Breast epithelium (tissue), 4 donors: ENCODE measurements at regions of chr9 and their contacts with region 1.

Region 1: GRCh38 chr9:108600896-108601295 is 254.9 kb downstream of the ACTL7B start:
- DNase-seq: no peak
- H3K4me3 ChIP-seq: no peak overlapping the region
- H3K27ac ChIP-seq: no peak overlapping the region
- H3K4me1 ChIP-seq: peaks cover 0 to 3% of the 10 kb centered on the region in 2 donors
- H3K27me3 ChIP-seq: no peaks in the 10 kb centered on the region
- CTCF ChIP-seq: no peak
- POLR2A ChIP-seq: no peak

Region 2: GRCh38 chr9:107410388-107410785 is 1190.5 kb before region 1 on chr9:
- intact Hi-C with region 1: no loop called
- DNase-seq: no peak
- H3K4me3 ChIP-seq: no peak overlapping the region
- H3K27ac ChIP-seq: no peak overlapping the region
- H3K4me1 ChIP-seq: no peaks in the 10 kb centered on the region
- H3K27me3 ChIP-seq: no peaks in the 10 kb centered on the region
- CTCF ChIP-seq: no peak
- POLR2A ChIP-seq: no peak

Region 3: GRCh38 chr9:108535526-108535925 is 65.4 kb before region 1 on chr9:
- intact Hi-C with region 1: loop called (anchors 2 kb)
- DNase-seq: no peak
- H3K4me3 ChIP-seq: no peak overlapping the region
- H3K27ac ChIP-seq: no peak overlapping the region
- H3K4me1 ChIP-seq: no peaks in the 10 kb centered on the region
- H3K27me3 ChIP-seq: no peaks in the 10 kb centered on the region
- CTCF ChIP-seq: peak in 2 of 3 donors; percentile 15 to 39
- POLR2A ChIP-seq: no peak

Region 4: DNA sequence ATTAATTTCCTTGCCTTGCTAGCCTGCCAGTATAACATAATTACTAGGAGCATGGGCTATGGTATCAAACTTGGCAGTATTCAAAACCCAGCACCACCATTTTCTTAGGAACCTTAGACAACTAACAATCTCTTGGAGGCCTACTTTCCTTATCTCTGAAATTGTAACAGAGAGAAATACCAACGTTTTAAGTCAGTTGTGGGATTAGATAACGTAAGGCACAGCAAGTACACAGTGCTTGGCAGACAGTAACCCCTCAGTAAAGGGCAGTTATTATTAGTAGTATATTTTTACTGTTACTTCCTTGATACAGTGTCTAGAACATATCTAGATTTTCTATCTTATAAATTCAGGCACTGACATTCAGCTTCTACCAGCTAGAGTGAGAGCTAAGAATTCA is 54.7 kb before region 1 on chr9:
- intact Hi-C with region 1: no loop called
- DNase-seq: no peak
- H3K4me3 ChIP-seq: no peak overlapping the region
- H3K27ac ChIP-seq: no peak overlapping the region
- H3K4me1 ChIP-seq: no peaks in the 10 kb centered on the region
- H3K27me3 ChIP-seq: no peaks in the 10 kb centered on the region
- CTCF ChIP-seq: no peak
- POLR2A ChIP-seq: no peak

Region 5: DNA sequence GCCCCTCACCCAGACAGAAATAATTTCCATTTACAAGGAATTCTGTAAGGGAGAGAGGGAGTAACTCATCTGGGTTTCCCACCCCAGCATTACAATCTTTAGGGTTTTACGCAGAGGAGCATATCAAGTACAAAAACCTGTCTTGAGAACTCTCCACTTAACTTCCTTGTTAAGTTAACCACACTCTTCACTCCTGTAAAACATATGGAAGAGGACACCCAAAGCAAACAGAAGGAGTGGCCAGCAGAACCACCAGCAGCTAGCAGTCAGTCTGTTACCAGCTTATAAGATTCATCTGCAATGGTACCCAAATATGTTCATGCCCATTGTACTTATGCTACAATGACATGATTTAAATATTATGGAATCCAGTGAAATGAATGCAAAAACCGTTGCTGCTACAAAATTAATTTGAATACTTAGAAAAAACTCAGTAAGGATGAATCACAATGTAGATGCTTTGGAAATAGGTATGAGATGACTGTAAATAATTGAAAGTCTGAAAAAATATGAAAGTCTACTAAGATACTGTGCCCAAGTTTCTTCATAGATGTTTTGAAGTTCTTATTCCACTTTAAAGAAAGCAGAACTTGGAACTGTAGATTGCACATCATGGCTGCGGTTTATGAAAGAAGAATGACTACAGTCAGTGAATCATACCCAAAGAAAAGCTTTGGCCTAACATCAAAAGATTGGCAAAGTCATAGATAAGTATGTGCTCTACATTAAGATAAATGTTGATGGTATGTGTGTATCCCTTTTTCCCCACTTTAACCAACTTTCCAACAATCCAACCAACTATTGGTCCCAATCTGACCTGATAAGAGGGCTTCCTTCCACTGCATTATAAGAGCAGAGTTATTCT is 21.3 kb after region 1 on chr9:
- intact Hi-C with region 1: no loop called
- DNase-seq: no peak
- H3K4me3 ChIP-seq: no peak overlapping the region
- H3K27ac ChIP-seq: no peak overlapping the region
- H3K4me1 ChIP-seq: no peaks in the 10 kb centered on the region
- H3K27me3 ChIP-seq: no peaks in the 10 kb centered on the region
- CTCF ChIP-seq: no peak
- POLR2A ChIP-seq: no peak